ENCODE measurements at regions of chr5 and their contacts with region 1.

Region 1: GRCh38 chr5:107571621-107572536 is 98.9 kb downstream of the EFNA5 start:
- DNase-seq: peak; percentile 72
- H3K4me3 ChIP-seq: peak overlapping the region; percentile 53
- H3K27ac ChIP-seq: no peak overlapping the region
- H3K27me3 ChIP-seq: no peaks in the 10 kb centered on the region
- CTCF ChIP-seq: peak; percentile 92

Region 2: GRCh38 chr5:107248066-107248695 is 323.7 kb before region 1 on chr5:
- CTCF ChIA-PET with region 1: interaction called, 12 read pairs
- POLR2A ChIA-PET with region 1: no interaction called
- DNase-seq: no peak
- H3K4me3 ChIP-seq: no peak overlapping the region
- H3K27ac ChIP-seq: no peak overlapping the region
- H3K27me3 ChIP-seq: no peaks in the 10 kb centered on the region
- CTCF ChIP-seq: peak; percentile 66

Region 3: DNA sequence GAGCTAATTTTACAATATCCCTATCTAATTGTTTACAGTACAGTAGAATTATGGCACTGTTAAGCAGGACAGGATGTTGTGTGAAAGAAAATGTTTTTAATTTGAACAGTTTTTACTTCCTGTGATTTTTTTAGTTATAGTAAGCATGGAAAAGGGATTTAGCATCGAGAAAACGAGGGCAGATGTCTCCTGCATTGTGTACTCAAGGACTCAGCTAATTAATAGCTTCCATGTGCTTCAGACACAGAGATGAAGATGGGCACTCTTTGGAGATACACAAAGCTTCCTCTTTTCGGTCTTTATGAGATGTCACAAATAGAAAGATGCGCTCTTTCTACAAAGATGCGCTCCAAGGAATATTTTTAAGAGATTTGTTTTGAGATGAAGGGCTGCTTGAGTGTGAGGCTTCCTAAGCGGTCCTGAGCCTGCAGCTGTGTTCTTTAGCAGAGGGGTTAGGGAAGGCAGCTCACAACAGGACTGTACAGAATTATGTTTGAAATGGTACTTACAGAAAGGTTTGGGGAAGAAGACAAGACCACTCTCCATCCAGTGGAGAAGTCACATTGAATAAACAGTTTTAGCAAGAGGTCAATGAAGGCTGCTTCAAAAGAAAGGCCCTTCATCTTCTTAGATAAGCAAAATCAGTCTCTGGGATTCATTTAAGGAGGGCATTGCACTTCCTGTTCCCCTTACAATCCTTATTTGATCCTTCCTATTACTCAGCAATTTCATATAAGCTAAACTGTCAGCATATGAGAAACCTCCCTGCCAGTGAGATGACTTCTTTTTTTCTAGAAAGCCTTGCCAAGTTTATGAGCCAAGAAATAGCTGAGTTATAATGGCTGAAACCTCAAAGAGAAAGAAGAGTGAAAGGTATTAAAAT is 212.6 kb before region 1 on chr5:
- CTCF ChIA-PET with region 1: interaction called, 15 read pairs
- POLR2A ChIA-PET with region 1: no interaction called
- DNase-seq: no peak
- H3K4me3 ChIP-seq: no peak overlapping the region
- H3K27ac ChIP-seq: no peak overlapping the region
- H3K27me3 ChIP-seq: no peaks in the 10 kb centered on the region
- CTCF ChIP-seq: no peak

Region 4: DNA sequence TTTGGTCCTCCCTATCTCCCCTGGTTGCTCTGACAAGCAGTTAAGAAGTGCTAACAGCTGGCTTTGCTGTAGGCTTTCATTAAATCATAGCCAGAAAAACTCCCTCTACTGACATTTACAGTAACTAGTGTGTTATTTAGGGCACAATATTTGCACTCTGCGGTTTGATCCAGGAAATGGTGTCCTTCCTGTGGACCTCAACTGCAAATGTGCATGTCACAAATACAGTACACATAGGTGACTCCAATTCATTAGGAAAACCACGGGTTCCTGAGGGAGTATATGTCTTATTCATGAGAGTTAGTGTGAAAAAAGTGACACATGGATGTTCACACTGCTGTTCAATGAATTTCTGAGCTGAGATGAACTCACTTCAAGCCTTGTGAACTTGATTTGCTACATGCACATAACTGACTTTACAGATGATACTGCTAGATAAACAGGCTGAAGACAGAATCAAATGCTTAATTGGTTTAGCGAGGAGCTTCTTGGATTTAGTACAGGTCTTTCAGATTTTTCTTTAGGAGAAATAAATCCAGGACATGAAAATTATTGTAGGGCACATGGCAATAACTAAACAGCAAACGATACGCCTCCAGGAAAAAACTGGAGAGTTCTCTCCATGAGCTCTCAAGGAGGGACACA is 182.6 kb before region 1 on chr5:
- CTCF ChIA-PET with region 1: interaction called, 16 read pairs
- POLR2A ChIA-PET with region 1: no interaction called
- DNase-seq: no peak
- H3K4me3 ChIP-seq: no peak overlapping the region
- H3K27ac ChIP-seq: no peak overlapping the region
- H3K27me3 ChIP-seq: no peaks in the 10 kb centered on the region
- CTCF ChIP-seq: no peak

Region 5: GRCh38 chr5:107425541-107426256 is 146.2 kb before region 1 on chr5:
- CTCF ChIA-PET with region 1: interaction called, 24 read pairs
- POLR2A ChIA-PET with region 1: no interaction called
- DNase-seq: peak; percentile 34
- H3K4me3 ChIP-seq: no peak overlapping the region
- H3K27ac ChIP-seq: no peak overlapping the region
- H3K27me3 ChIP-seq: no peaks in the 10 kb centered on the region
- CTCF ChIP-seq: no peak

Region 6: GRCh38 chr5:107546719-107547118 is 25.2 kb before region 1 on chr5:
- CTCF ChIA-PET with region 1: interaction called, 48 read pairs
- POLR2A ChIA-PET with region 1: no interaction called
- DNase-seq: no peak
- H3K4me3 ChIP-seq: no peak overlapping the region
- H3K27ac ChIP-seq: no peak overlapping the region
- H3K27me3 ChIP-seq: no peaks in the 10 kb centered on the region
- CTCF ChIP-seq: no peak

Region 7: GRCh38 chr5:107557051-107557658 is 14.7 kb before region 1 on chr5:
- CTCF ChIA-PET with region 1: interaction called, 62 read pairs
- POLR2A ChIA-PET with region 1: interaction called, 3 read pairs
- DNase-seq: no peak
- H3K4me3 ChIP-seq: no peak overlapping the region
- H3K27ac ChIP-seq: no peak overlapping the region
- H3K27me3 ChIP-seq: no peaks in the 10 kb centered on the region
- CTCF ChIP-seq: no peak

Region 8: GRCh38 chr5:108024986-108025385 is 453.1 kb after region 1 on chr5:
- CTCF ChIA-PET with region 1: no interaction called
- POLR2A ChIA-PET with region 1: no interaction called
- DNase-seq: no peak
- H3K4me3 ChIP-seq: no peak overlapping the region
- H3K27ac ChIP-seq: no peak overlapping the region
- H3K27me3 ChIP-seq: no peaks in the 10 kb centered on the region
- CTCF ChIP-seq: no peak